Aorta (tissue), 5 donors: ENCODE measurements at regions of chr6 and their contacts with region 1.

Region 1: GRCh38 chr6:150800674-150801314 is 64.7 kb upstream of the MTHFD1L start:
- DNase-seq: peak in 1 of 2 donors; percentile 35
- ATAC-seq: peak; percentile 44
- H3K4me3 ChIP-seq: no peak overlapping the region
- H3K27ac ChIP-seq: no peak overlapping the region
- H3K4me1 ChIP-seq: no peaks in the 10 kb centered on the region
- H3K27me3 ChIP-seq: no peaks in the 10 kb centered on the region

Region 2: GRCh38 chr6:150741633-150742504 is 58.9 kb before region 1 on chr6:
- intact Hi-C with region 1: loop called in 1 of 2 experiments (anchors 2 kb)
- DNase-seq: no peak
- ATAC-seq: no peak
- H3K4me3 ChIP-seq: no peak overlapping the region
- H3K27ac ChIP-seq: no peak overlapping the region
- H3K4me1 ChIP-seq: no peaks in the 10 kb centered on the region
- H3K27me3 ChIP-seq: no peaks in the 10 kb centered on the region

Region 3: DNA sequence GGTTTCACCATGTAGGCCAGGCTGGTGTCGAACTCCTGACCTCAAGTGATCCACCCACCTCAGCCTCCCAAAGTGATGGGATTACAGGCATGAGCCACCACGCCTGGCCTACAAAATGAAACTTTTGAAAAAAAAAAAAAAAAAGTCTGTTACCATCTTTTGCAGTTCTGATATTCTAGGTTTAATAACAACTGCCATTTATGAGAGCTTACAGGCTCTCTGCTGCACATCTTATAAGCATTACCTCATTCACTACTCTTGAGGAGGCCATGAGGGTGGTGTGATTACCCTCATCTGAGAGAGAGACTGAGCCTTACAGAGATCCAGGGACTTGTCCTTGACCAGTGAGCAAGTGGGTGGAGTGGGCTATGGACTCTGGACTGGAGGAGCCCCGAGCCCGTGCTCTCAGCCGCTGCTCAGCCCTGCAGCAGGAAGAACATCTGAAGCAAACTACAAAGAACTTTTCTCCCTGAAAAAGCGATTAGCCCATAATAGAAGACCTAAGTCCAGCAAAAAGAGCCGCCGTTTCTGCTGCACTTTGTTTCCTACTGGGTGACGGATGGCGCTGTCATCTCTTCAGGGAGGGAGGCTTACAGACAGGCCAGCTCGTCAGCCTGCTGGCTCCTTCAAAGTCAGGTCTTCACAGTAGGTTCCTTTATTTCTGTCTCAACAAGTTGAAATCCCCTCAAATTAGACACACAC is 319.2 kb after region 1 on chr6:
- intact Hi-C with region 1: no loop called
- DNase-seq: peak in 1 of 2 donors; percentile 46
- ATAC-seq: no peak
- H3K4me3 ChIP-seq: no peak overlapping the region
- H3K27ac ChIP-seq: no peak overlapping the region
- H3K4me1 ChIP-seq: no peaks in the 10 kb centered on the region
- H3K27me3 ChIP-seq: no peaks in the 10 kb centered on the region